Endothelial cell of umbilical vein (primary cell): ENCODE measurements at regions of chrX and their contacts with region 1.

Region 1: GRCh38 chrX:141278302-141278701 is 36.0 kb upstream of the SPANXC start:
- DNase-seq: peak; percentile 29
- H3K4me3 ChIP-seq: no peak overlapping the region
- H3K27ac ChIP-seq: no peak overlapping the region
- H3K4me1 ChIP-seq: no peaks in the 10 kb centered on the region
- H3K27me3 ChIP-seq: no peaks in the 10 kb centered on the region
- CTCF ChIP-seq: peak; percentile 59 to 61
- POLR2A ChIP-seq: no peak

Region 2: GRCh38 chrX:140526171-140526570 is 752.1 kb before region 1 on chrX:
- CTCF ChIA-PET with region 1: no interaction called
- POLR2A ChIA-PET with region 1: no interaction called
- dilution Hi-C with region 1: no loop called
- intact Hi-C with region 1: no loop called
- DNase-seq: no peak
- H3K4me3 ChIP-seq: no peak overlapping the region
- H3K27ac ChIP-seq: no peak overlapping the region
- H3K4me1 ChIP-seq: no peaks in the 10 kb centered on the region
- H3K27me3 ChIP-seq: no peaks in the 10 kb centered on the region
- CTCF ChIP-seq: no peak
- POLR2A ChIP-seq: no peak

Region 3: DNA sequence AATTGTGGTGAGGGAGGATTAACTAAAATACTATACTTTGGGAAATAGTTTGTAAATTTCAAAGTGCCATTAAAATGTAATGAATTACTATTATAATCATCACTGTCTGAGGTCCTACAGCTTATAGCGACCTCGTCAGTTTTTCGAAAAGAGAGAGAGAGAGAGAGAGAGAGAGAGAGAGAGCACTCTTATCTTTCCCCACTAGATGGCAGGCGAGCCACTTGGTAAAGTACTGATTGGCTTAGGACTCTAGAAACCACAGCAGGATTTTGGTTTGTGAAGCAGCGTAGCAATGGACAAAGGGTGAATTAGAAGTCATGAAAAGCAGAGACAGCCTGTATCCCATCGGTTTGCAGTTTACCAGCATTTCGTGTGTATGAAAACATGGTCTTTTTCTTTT is 516.2 kb before region 1 on chrX:
- CTCF ChIA-PET with region 1: interaction called, 18 read pairs
- POLR2A ChIA-PET with region 1: no interaction called
- dilution Hi-C with region 1: no loop called
- intact Hi-C with region 1: loop called (anchors 10 kb)
- DNase-seq: peak; percentile 46
- H3K4me3 ChIP-seq: no peak overlapping the region
- H3K27ac ChIP-seq: no peak overlapping the region
- H3K4me1 ChIP-seq: peaks cover 3% of the 10 kb centered on the region
- H3K27me3 ChIP-seq: no peaks in the 10 kb centered on the region
- CTCF ChIP-seq: peak; percentile 43 to 69
- POLR2A ChIP-seq: no peak

Region 4: DNA sequence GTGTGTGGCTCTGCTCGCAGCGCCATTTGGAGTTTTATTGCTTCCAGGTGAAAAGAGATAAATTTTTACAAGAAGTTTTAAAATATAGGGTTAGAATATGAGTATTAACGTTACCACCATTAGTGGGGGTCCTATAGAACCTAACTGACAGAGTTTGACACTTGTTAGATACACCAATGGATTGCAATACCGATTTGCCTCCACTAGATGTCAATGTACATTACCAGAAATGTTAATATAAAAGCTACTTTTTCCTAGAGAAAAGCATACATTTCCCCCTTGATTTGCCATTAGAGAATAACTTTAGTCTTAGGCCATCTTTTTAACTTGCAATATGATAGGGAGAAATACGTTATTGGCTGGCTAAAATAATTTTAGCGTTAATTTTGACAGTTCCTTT is 460.4 kb before region 1 on chrX:
- CTCF ChIA-PET with region 1: interaction called, 19 read pairs
- POLR2A ChIA-PET with region 1: no interaction called
- dilution Hi-C with region 1: no loop called
- intact Hi-C with region 1: loop called (anchors 1 kb)
- DNase-seq: peak; percentile 8
- H3K4me3 ChIP-seq: no peak overlapping the region
- H3K27ac ChIP-seq: no peak overlapping the region
- H3K4me1 ChIP-seq: no peaks in the 10 kb centered on the region
- H3K27me3 ChIP-seq: no peaks in the 10 kb centered on the region
- CTCF ChIP-seq: peak; percentile 27 to 29
- POLR2A ChIP-seq: no peak

Region 5: DNA sequence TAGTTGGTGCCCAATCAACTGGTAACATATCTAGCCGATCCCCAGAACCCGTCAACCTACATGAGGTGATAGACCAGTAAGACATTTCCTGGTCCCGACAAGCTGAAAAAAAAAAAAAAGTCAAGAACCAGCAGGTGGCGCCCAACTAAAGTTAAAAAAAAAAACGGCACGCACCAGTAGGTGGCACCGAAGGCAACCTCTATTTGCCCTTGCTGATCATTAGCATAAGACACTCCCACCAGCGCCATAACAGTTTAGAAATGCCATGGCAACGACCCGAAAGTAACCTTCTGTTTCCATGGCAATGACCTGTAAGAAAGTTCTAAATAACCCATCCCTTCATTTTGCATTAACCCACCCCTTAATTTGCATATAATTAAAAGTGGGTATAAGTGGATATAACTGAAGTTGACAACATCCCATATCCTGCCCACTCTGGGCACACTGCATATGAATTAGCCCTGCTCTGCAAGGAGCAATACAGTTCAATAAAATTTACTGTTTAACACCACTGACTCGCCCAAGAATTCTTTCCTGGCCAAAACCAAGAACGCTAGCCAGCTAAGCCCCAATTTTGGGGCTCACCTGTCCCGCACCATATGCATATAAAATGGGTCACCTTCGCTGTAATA is 359.8 kb before region 1 on chrX:
- CTCF ChIA-PET with region 1: interaction called, 44 read pairs
- POLR2A ChIA-PET with region 1: no interaction called
- dilution Hi-C with region 1: no loop called
- intact Hi-C with region 1: loop called (anchors 1 kb)
- DNase-seq: peak; percentile 57
- H3K4me3 ChIP-seq: no peak overlapping the region
- H3K27ac ChIP-seq: peak overlapping the region; percentile 31
- H3K4me1 ChIP-seq: no peaks in the 10 kb centered on the region
- H3K27me3 ChIP-seq: no peaks in the 10 kb centered on the region
- CTCF ChIP-seq: peak; percentile 46 to 49
- POLR2A ChIP-seq: no peak

Region 6: DNA sequence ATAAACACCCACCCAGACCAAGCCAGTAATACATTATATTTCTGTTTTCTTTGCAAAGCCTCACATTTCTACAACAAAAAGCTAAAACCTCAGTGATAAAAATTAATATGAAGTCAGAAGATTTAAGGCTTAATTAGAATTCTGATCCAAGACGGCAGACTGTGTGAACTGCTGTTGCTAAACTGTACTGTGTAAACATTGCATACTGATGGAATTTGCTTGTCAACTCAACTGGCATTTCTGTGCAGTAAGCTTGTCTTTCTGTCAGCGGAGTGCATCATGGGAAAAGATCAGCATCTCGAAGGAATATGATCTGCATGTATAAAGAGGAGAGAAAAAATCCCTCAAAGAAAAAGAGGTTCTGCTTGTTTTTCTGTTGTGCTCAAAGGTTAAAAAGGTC is 345.3 kb before region 1 on chrX:
- CTCF ChIA-PET with region 1: no interaction called
- POLR2A ChIA-PET with region 1: no interaction called
- dilution Hi-C with region 1: no loop called
- intact Hi-C with region 1: no loop called
- DNase-seq: no peak
- H3K4me3 ChIP-seq: no peak overlapping the region
- H3K27ac ChIP-seq: no peak overlapping the region
- H3K4me1 ChIP-seq: no peaks in the 10 kb centered on the region
- H3K27me3 ChIP-seq: no peaks in the 10 kb centered on the region
- CTCF ChIP-seq: no peak
- POLR2A ChIP-seq: no peak

Region 7: DNA sequence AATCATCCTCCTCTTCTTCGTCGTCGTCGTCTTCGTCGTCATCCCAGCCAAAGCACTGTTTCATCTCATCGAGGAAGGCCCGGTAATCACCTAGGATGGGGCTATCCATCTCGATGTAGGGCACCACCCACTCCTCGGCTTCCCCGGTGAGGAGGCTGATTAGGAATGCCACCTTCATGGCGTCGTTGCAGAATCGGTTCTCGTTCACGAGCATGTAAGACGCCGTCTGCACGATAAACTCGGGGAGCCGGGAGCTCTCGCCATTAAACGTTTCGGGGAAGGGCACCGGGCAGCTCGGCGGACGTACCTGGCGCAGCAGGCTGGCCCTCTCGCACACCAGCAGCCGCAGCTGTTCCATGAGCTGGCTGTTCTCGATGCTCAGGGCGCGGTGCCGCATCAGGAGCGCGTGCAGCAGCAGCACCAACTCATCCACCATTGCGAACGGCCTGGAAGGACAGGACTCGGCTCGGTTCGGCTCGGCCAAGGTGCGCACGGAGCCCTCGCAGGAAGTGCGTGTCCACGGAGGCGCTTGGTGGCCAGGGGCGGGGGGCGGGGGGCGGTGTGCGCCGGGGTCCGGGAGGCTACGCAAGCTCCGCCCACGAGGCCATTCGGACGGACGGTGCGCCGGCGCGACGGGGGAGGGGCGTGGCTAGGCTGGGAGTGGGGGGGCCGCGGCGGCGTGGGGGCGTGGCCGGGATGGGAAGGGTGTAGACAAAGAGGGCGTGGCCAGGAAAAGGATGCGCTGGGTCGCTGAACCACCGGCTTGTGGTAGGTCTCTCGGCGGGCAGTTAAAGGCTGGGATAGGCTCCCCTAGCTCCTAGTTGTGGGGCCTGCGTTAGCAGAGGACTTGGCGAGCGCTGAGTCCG is 101.5 kb before region 1 on chrX and contains the start of gene LDOC1:
- CTCF ChIA-PET with region 1: interaction called, 3 read pairs
- POLR2A ChIA-PET with region 1: no interaction called
- dilution Hi-C with region 1: no loop called
- intact Hi-C with region 1: loop called (anchors 5 kb)
- DNase-seq: peak; percentile 82
- H3K4me3 ChIP-seq: peak within 1 kb of the TSS; percentile 41 to 79 (median 68)
- H3K27ac ChIP-seq: no peak within 1 kb of the TSS
- H3K4me1 ChIP-seq: peaks cover 7% of the 10 kb centered on the region
- H3K27me3 ChIP-seq: no peaks in the 10 kb centered on the region
- CTCF ChIP-seq: no peak
- POLR2A ChIP-seq: no peak
- total RNA-seq, gene LDOC1: 46.2 and 51.4 TPM in 2 replicates

Region 8: DNA sequence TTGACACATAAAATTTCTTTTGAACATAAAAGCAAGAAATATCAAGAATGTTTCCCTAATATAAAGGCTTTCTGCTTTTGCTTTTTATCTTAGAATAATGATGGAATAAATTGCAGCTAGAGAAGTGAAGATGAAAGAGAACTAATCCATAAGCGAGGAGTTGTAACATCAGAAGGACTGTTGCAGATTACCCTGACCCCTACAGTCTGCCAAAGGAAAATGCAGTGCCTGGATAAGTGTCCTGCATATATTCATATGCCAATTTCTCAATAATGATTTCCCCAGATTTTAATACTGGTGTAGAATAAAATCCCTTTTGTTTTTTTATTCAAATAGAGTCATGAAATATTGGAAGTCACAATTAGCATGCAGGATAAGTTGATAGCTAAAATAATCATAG is 810.9 kb after region 1 on chrX:
- CTCF ChIA-PET with region 1: no interaction called
- POLR2A ChIA-PET with region 1: no interaction called
- dilution Hi-C with region 1: no loop called
- intact Hi-C with region 1: loop called (anchors 10 kb)
- DNase-seq: peak; percentile 1
- H3K4me3 ChIP-seq: no peak overlapping the region
- H3K27ac ChIP-seq: no peak overlapping the region
- H3K4me1 ChIP-seq: no peaks in the 10 kb centered on the region
- H3K27me3 ChIP-seq: no peaks in the 10 kb centered on the region
- CTCF ChIP-seq: peak; percentile 11 to 17
- POLR2A ChIP-seq: no peak